Thyroid gland (tissue), 4 donors: ENCODE measurements at regions of chr5 and their contacts with region 1.

Region 1: GRCh38 chr5:179806250-179807222 is at the start of gene MGAT4B:
- DNase-seq: peak; percentile 76 to 81
- H3K4me3 ChIP-seq: peak within 1 kb of the TSS; percentile 71 to 83 (median 73)
- H3K27ac ChIP-seq: peak within 1 kb of the TSS; percentile 55 to 89 (median 89)
- H3K4me1 ChIP-seq: peaks cover 13 to 39% of the 10 kb centered on the region in 2 donors
- H3K27me3 ChIP-seq: no peaks in the 10 kb centered on the region
- CTCF ChIP-seq: peak in 1 of 6 experiments; percentile 25
- POLR2A ChIP-seq: peak; percentile 30 to 77
- total RNA-seq, gene MGAT4B: 83.6 to 108 (median 102) TPM

Region 2: DNA sequence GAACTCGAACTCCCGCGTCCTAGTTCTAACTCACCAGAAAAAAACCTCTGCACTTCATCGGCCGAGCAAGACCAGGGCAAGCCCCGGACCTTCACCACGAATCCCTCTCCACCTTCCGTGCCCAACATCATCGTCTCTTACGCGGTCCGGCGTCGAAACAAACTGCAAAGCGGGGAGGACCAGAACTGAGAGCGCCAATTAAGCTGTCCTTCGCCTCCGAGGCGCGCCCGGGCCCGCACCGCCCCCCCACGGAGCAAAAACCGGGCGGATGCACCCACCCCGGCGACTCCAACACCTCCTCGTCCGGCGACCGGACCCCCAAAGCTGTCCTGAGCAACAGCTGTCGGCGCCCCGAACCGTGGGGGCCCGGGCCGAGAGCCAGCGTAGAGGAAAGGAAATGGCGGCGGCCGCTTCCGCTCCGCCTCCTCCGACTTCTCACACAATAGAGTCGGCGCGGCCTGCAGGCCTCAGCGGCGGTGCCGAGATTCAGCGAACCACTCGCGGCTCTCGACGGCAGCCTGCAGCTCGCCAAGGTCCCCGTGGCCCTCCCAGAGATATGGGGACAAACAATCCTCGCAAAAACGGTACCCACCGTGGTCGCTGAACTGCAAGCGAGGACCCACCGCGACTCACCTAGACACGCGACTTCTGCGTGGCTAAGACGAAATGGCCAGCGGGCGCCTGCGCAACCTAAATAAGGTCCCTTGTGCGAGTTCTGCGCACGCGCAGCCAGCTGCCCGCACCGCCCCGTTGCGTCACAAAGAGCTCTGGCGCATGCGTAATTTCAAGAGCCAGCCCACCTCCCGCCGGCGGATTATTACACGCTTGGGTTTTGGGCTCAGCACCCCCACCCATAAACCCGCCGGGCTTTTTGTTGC is 183.3 kb before region 1 on chr5 and contains the start of gene HNRNPH1:
- intact Hi-C with region 1: loop called (anchors 5 kb)
- DNase-seq: peak; percentile 98 to 99
- H3K4me3 ChIP-seq: peak within 1 kb of the TSS; percentile 99 to 100 (median 100)
- H3K27ac ChIP-seq: peak within 1 kb of the TSS; percentile 100
- H3K4me1 ChIP-seq: peaks cover 28 to 41% of the 10 kb centered on the region in 2 donors
- H3K27me3 ChIP-seq: no peaks in the 10 kb centered on the region
- CTCF ChIP-seq: no peak
- POLR2A ChIP-seq: peak; percentile 99 to 100
- total RNA-seq, gene HNRNPH1: 459 to 991 (median 620) TPM

Region 3: DNA sequence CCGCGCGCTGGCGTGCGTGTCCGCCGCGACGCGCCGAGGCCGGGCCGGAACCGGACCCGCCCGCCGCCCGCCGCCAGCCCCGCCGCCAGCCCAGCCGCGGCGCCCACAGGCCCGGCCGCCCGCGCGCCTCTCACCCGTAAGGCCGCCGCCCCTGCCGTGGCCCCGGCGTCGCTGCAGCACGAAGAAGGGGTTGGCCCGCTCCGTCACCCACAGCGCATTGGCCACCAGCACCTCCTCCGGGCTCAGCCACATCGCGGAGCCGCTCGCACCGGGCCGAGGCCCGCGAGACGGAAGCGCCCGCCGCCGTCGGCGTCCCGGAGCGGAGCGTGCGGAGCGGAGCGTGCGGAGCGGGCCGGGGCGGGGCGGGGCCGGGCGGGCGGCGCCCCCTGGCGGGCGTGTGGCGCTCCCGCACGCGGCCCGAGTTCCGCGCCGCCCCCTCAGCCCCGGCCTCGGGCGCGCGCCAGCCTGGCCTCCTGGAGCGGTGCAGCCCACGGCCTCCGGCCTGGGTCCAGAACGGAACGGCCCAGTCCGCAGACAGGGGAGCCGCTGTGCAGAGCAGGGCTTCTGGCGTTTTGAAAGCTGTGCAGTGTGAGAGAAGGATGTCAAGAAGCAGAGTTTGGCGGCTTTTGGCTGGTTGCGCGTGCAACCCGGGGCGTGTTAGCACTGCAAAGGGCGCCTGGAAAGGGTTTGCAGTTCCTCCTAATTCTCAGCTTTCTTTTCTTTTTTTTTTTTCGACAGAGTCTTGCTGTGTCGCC is 101.2 kb after region 1 on chr5 and contains the start of gene TBC1D9B:
- intact Hi-C with region 1: loop called (anchors 5 kb)
- DNase-seq: peak; percentile 62 to 66
- H3K4me3 ChIP-seq: peak within 1 kb of the TSS in 2 of 3 donors; percentile 31 to 64
- H3K27ac ChIP-seq: peak within 1 kb of the TSS in 2 of 3 donors; percentile 49 to 66
- H3K4me1 ChIP-seq: peaks cover 10 to 15% of the 10 kb centered on the region in 2 donors
- H3K27me3 ChIP-seq: no peaks in the 10 kb centered on the region
- CTCF ChIP-seq: peak in 3 of 6 experiments; percentile 54 to 77 (median 59)
- POLR2A ChIP-seq: peak in 1 of 2 donors; percentile 38
- total RNA-seq, gene TBC1D9B: 75.5 to 115 (median 94.3) TPM